Activated CD4-positive, alpha-beta T cell treated with anti-CD3 and anti-CD28 coated beads for 36 hours (primary cell): ENCODE measurements at regions of chr3 and their contacts with region 1.

Region 1: GRCh38 chr3:139389458-139390209 is at the start of gene COPB2:
- DNase-seq: peak; percentile 98
- ATAC-seq: peak; percentile 93
- H3K4me3 Mint-ChIP-seq: peak within 1 kb of the TSS; percentile 96
- H3K27ac Mint-ChIP-seq: peak within 1 kb of the TSS; percentile 97
- H3K4me1 Mint-ChIP-seq: peaks cover 38% of the 10 kb centered on the region
- H3K27me3 Mint-ChIP-seq: no peaks in the 10 kb centered on the region
- total RNA-seq, gene COPB2: 90.9 to 99.2 TPM

Region 2: DNA sequence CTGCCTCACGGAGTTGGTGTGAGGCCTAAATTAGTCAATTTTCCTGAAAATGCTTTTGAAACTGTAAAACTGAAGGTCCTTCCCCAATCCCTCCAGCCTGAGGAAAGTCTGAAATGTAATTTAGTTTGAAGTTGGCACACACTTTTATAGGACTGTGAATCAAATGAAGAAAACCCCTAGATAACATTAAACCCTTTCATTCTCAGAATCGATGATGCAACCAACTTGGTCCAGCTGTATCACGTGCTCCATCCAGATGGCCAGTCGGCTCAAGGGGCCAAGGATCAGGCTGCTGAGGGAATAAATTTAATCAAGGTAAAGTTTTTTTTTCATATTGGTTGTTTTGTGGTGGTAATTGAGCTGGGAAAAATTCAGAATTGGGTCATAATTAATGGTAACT is 34.2 kb before region 1 on chr3:
- CTCF ChIA-PET with region 1: no interaction called
- POLR2A ChIA-PET with region 1: interaction called, 5 read pairs
- intact Hi-C with region 1: loop called (anchors 2 kb)
- DNase-seq: no peak
- ATAC-seq: no peak
- H3K4me3 Mint-ChIP-seq: no peak overlapping the region
- H3K27ac Mint-ChIP-seq: no peak overlapping the region
- H3K4me1 Mint-ChIP-seq: peaks cover 37% of the 10 kb centered on the region
- H3K27me3 Mint-ChIP-seq: no peaks in the 10 kb centered on the region

Region 3: GRCh38 chr3:139677388-139678155 is 287.9 kb after region 1 on chr3 and contains the start of gene NMNAT3:
- CTCF ChIA-PET with region 1: no interaction called
- POLR2A ChIA-PET with region 1: no interaction called
- intact Hi-C with region 1: loop called in 1 of 2 experiments (anchors 1 kb)
- DNase-seq: peak; percentile 92
- ATAC-seq: peak; percentile 100
- H3K4me3 Mint-ChIP-seq: peak within 1 kb of the TSS; percentile 76
- H3K27ac Mint-ChIP-seq: peak within 1 kb of the TSS; percentile 70
- H3K4me1 Mint-ChIP-seq: peaks cover 11% of the 10 kb centered on the region
- H3K27me3 Mint-ChIP-seq: no peaks in the 10 kb centered on the region
- total RNA-seq, gene NMNAT3: 5.9 to 6.1 TPM